Sigmoid colon (tissue), 7 donors: ENCODE measurements at regions of chr4 and their contacts with region 1.

Region 1: DNA sequence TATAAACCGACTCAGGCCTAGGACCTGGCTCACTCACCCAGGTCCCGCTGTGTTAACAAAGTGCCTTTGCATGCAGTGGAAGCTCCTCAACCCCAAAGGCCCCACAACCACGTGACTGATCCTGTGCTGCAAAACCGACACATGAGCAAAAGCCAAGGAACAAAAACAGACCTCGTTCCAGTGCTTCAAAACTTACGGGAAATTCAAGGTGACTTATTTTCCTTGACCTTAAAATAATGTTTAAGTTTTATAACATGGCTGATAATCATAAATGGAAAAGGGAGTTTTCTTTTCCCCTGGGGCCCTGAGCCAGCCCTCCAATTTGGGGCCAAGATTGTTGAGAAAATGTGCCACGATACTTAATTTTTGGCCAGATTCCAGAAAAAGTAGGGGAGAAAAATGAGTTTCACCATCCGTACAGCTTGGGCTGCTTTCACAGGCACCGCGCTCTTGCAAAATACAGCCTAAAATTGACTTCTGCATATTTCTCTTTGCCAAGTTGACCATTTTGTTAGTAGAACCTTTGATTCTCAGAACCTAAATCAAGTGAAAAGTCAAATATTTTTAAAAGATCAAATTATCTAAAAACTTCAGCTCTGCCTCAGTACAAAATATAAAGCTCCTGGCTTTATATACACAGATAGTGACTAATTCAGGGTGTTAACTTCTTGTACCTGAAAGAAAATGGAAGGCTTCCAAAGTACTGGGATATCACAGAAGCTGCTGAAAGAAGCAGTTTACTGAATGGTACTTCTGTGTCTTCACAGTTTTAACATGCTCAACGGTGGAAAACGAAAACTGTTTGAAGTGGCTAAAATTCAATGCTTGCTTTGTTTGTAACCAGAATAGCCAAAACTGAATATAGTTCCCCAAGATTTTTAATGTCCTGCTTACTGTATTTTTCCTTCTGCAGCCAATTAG is 93.8 kb downstream of the APBB2 start:
- DNase-seq: peak; percentile 92
- H3K4me3 ChIP-seq: peak overlapping the region in 2 of 4 donors; percentile 11 to 16
- H3K27ac ChIP-seq: peak overlapping the region; percentile 69 to 80 (median 74)
- H3K4me1 ChIP-seq: peaks cover 0 to 55% (median 43%) of the 10 kb centered on the region in 4 donors
- H3K27me3 ChIP-seq: no peaks in the 10 kb centered on the region
- CTCF ChIP-seq: no peak
- EP300 ChIP-seq: peak in 1 of 4 donors; percentile 17
- POLR2A ChIP-seq: no peak

Region 2: DNA sequence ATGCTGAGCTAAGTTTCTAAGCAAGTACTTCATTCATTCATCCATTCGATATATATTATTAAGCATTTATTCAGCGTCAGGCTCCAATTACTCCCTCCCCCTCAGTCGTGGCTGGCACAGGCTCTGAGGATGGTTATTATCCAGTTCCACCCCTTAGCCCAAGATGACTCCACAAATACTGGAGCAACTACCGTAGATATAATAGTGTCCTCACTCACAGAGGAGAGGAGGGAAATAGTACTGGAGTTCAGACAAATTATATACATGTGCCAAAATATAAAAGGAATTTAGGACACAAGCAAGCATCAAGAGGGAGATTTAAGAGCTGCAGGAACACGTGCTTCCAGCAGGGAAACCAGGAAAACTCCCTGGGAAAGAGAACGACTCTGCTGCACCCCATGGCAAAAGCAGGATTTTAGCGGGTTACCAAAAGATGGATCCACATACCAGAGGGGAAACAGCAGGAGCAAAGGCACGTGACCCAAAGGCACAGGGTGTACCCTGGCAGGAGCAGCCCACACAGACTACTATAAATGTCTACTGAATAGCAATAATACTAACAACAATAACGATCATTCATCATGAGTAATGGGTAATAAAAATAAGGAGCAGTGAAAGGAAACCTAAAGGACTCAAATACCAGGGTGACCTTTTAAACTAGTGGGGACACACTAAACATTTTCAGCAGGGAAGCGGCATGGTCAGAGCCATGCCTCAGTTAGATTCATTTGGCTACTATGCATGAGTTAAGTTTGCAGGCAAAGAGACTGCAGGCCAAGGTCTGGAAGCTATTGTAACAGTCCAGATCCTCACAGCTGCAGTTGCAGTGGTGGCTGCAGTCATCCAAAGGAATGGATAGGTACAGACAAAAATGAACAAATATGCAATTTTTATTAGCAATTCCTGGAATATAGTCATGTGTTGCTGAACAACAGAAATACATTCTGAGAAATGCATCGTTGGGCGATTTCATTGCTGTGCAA is 59.9 kb before region 1 on chr4:
- intact Hi-C with region 1: loop called (anchors 5 kb)
- DNase-seq: peak; percentile 89
- H3K4me3 ChIP-seq: peak overlapping the region in 1 of 4 donors; percentile 3
- H3K27ac ChIP-seq: peak overlapping the region in 3 of 4 donors; percentile 70 to 81 (median 77)
- H3K4me1 ChIP-seq: peaks cover 0 to 77% (median 63%) of the 10 kb centered on the region in 4 donors
- H3K27me3 ChIP-seq: no peaks in the 10 kb centered on the region
- CTCF ChIP-seq: no peak
- EP300 ChIP-seq: peak; percentile 79 to 98 (median 92)
- POLR2A ChIP-seq: no peak